B cell (primary cell): ENCODE measurements at regions of chr13 and their contacts with region 1.

Region 1: GRCh38 chr13:46961719-46962118 is 64.9 kb upstream of the HTR2A start:
- DNase-seq: no peak
- ATAC-seq: no peak
- H3K4me3 ChIP-seq: no peak overlapping the region
- H3K4me3 Mint-ChIP-seq: no peak overlapping the region
- H3K27ac ChIP-seq: no peak overlapping the region
- H3K27ac Mint-ChIP-seq: no peak overlapping the region
- H3K4me1 ChIP-seq: no peaks in the 10 kb centered on the region
- H3K4me1 Mint-ChIP-seq: peaks cover 2% of the 10 kb centered on the region
- H3K27me3 ChIP-seq: no peaks in the 10 kb centered on the region
- H3K27me3 Mint-ChIP-seq: no peaks in the 10 kb centered on the region
- CTCF ChIP-seq: no peak

Region 2: GRCh38 chr13:46975173-46975572 is 13.5 kb after region 1 on chr13:
- CTCF ChIA-PET with region 1: interaction called, 19 read pairs
- POLR2A ChIA-PET with region 1: no interaction called
- intact Hi-C with region 1: no loop called
- DNase-seq: no peak
- ATAC-seq: no peak
- H3K4me3 ChIP-seq: no peak overlapping the region
- H3K4me3 Mint-ChIP-seq: no peak overlapping the region
- H3K27ac ChIP-seq: no peak overlapping the region
- H3K27ac Mint-ChIP-seq: no peak overlapping the region
- H3K4me1 ChIP-seq: no peaks in the 10 kb centered on the region
- H3K4me1 Mint-ChIP-seq: peaks cover 6% of the 10 kb centered on the region
- H3K27me3 ChIP-seq: no peaks in the 10 kb centered on the region
- H3K27me3 Mint-ChIP-seq: no peaks in the 10 kb centered on the region
- CTCF ChIP-seq: no peak

Region 3: DNA sequence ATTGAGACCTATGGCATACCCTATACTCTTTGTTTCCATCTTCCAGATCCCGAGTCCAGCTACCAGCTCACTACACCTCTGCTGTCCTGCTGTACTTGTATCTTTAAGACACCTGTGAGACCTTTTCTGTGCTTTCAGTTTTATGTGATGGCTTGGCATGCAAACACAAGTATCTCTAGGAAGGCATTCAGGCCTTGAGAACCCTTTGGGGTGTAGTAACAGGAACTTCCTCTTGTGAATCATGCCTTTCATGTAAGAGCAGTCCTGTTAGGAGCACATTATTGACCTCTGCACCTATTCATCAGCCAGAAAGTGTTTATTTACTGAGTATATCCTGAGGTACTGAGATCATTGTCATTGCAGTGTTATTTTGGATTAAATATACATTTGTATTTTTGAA is 22.2 kb after region 1 on chr13:
- CTCF ChIA-PET with region 1: interaction called, 24 read pairs
- POLR2A ChIA-PET with region 1: no interaction called
- intact Hi-C with region 1: no loop called
- DNase-seq: peak; percentile 69
- ATAC-seq: peak; percentile 51
- H3K4me3 ChIP-seq: peak overlapping the region in 2 of 5 experiments; percentile 12 to 52
- H3K4me3 Mint-ChIP-seq: peak overlapping the region; percentile 82
- H3K27ac ChIP-seq: peak overlapping the region; percentile 33 to 44
- H3K27ac Mint-ChIP-seq: peak overlapping the region; percentile 84
- H3K4me1 ChIP-seq: peaks cover 25 to 26% of the 10 kb centered on the region in 2 donors
- H3K4me1 Mint-ChIP-seq: peaks cover 26% of the 10 kb centered on the region
- H3K27me3 ChIP-seq: no peaks in the 10 kb centered on the region
- H3K27me3 Mint-ChIP-seq: peaks cover 2% of the 10 kb centered on the region
- CTCF ChIP-seq: no peak

Region 4: GRCh38 chr13:47025791-47026447 is 64.2 kb after region 1 on chr13:
- CTCF ChIA-PET with region 1: no interaction called
- POLR2A ChIA-PET with region 1: no interaction called
- intact Hi-C with region 1: no loop called
- DNase-seq: peak; percentile 12
- ATAC-seq: no peak
- H3K4me3 ChIP-seq: no peak overlapping the region
- H3K4me3 Mint-ChIP-seq: no peak overlapping the region
- H3K27ac ChIP-seq: no peak overlapping the region
- H3K27ac Mint-ChIP-seq: no peak overlapping the region
- H3K4me1 ChIP-seq: peaks cover 11 to 12% of the 10 kb centered on the region in 2 donors
- H3K4me1 Mint-ChIP-seq: peaks cover 17% of the 10 kb centered on the region
- H3K27me3 ChIP-seq: peaks cover 0 to 3% (median 0%) of the 10 kb centered on the region in 4 experiments
- H3K27me3 Mint-ChIP-seq: peaks cover 4% of the 10 kb centered on the region
- CTCF ChIP-seq: no peak

Region 5: GRCh38 chr13:47459512-47459911 is 497.8 kb after region 1 on chr13:
- CTCF ChIA-PET with region 1: interaction called, 12 read pairs
- POLR2A ChIA-PET with region 1: no interaction called
- intact Hi-C with region 1: no loop called
- DNase-seq: peak; percentile 5
- ATAC-seq: no peak
- H3K4me3 ChIP-seq: no peak overlapping the region
- H3K4me3 Mint-ChIP-seq: no peak overlapping the region
- H3K27ac ChIP-seq: no peak overlapping the region
- H3K27ac Mint-ChIP-seq: no peak overlapping the region
- H3K4me1 ChIP-seq: no peaks in the 10 kb centered on the region
- H3K4me1 Mint-ChIP-seq: no peaks in the 10 kb centered on the region
- H3K27me3 ChIP-seq: no peaks in the 10 kb centered on the region
- H3K27me3 Mint-ChIP-seq: no peaks in the 10 kb centered on the region
- CTCF ChIP-seq: no peak

Region 6: GRCh38 chr13:47774671-47774994 is 812.9 kb after region 1 on chr13:
- CTCF ChIA-PET with region 1: interaction called, 26 read pairs
- POLR2A ChIA-PET with region 1: no interaction called
- intact Hi-C with region 1: no loop called
- DNase-seq: no peak
- ATAC-seq: no peak
- H3K4me3 ChIP-seq: no peak overlapping the region
- H3K4me3 Mint-ChIP-seq: no peak overlapping the region
- H3K27ac ChIP-seq: no peak overlapping the region
- H3K27ac Mint-ChIP-seq: no peak overlapping the region
- H3K4me1 ChIP-seq: no peaks in the 10 kb centered on the region
- H3K4me1 Mint-ChIP-seq: no peaks in the 10 kb centered on the region
- H3K27me3 ChIP-seq: peaks cover 0 to 6% (median 0%) of the 10 kb centered on the region in 4 experiments
- H3K27me3 Mint-ChIP-seq: peaks cover 33% of the 10 kb centered on the region
- CTCF ChIP-seq: no peak